ENCODE measurements at regions of chr6 and their contacts with region 1.

Region 1: DNA sequence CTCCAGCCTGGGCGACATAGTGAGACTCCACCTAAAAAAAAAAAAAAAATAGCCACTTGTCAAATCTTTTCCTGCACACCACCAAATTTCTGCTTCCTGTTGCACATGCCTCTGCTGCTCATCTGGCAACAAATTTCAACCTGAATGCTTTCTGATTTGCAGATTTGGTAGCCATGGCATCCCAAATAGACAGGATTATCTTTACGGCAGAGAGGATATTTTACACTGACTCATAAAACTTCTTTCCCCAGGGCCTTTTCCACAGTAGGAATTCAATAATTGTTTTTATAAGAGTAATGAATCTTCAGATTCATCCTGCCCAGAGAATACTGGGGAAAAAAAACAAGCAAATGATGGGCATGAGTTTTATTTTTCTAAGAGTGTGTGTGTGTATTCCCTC is 264.6 kb downstream of the FRK start:
- DNase-seq: peak; percentile 2
- H3K27ac ChIP-seq: no peak overlapping the region
- CTCF ChIP-seq: no peak

Region 2: GRCh38 chr6:115811541-115811940 is 15.5 kb after region 1 on chr6:
- CTCF ChIA-PET with region 1: no interaction called
- POLR2A ChIA-PET with region 1: interaction called, 12 read pairs
- DNase-seq: no peak
- H3K27ac ChIP-seq: no peak overlapping the region
- CTCF ChIP-seq: no peak

Measured in RWPE1 (cell line).